ENCODE measurements at regions of chr10 and their contacts with region 1.

Region 1: DNA sequence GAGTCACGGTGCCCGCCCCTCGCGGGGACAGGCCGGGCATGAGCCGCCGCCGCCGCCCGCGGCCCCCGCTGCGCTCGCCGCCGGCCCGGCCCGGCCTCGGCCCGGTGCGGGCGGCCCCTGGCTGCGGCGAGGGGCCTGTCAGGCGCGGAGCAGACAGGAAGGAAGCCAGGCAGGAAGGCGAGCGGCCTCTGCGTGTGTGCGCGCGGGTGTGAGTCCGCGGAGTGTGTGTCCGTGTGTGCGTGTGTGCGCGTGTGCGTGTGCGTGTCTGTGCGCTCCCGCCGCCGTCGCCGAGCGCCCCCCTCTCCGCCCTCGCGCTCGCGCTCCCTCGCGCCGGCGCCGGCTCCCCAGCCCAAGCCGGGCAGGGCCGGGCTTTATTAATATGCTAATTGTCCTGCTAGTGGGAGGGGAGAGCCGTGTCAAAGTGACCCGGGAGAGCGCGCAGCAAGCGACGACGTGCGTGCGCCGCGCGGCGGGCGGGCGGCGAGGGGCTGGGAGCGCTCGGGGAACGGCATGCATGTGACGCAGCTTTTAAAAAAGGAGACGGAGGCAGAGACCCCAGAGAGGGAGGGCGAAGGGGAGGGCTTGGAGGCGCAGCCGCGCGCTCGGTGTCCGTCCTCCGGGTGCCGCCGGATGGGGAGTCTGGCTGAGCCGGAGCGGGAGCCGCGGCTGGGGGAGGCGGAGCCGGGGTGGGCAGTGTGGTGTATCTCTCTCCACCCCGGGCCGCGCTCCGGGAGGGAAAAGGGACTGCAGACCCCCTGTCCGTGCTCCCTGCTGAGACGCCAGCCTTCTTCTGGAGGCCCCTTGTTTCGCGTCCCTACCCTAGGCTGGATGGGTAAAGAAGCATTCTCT is at the start of gene LDB1:
- DNase-seq: peak; percentile 91
- H3K4me3 Mint-ChIP-seq: peak within 1 kb of the TSS; percentile 94
- H3K27ac Mint-ChIP-seq: peak within 1 kb of the TSS; percentile 98
- H3K4me1 Mint-ChIP-seq: peaks cover 49% of the 10 kb centered on the region
- H3K27me3 Mint-ChIP-seq: no peaks in the 10 kb centered on the region
- total RNA-seq, gene LDB1: 76.4 and 78.2 TPM in 2 replicates

Region 2: GRCh38 chr10:101901340-101901739 is 219.0 kb before region 1 on chr10:
- intact Hi-C with region 1: no loop called
- DNase-seq: no peak
- H3K4me3 Mint-ChIP-seq: no peak overlapping the region
- H3K27ac Mint-ChIP-seq: no peak overlapping the region
- H3K4me1 Mint-ChIP-seq: peaks cover 11% of the 10 kb centered on the region
- H3K27me3 Mint-ChIP-seq: no peaks in the 10 kb centered on the region

Region 3: GRCh38 chr10:102064868-102065560 is 55.4 kb before region 1 on chr10 and contains the start of gene HPS6:
- intact Hi-C with region 1: loop called (anchors 2 kb)
- DNase-seq: peak; percentile 97
- H3K4me3 Mint-ChIP-seq: peak within 1 kb of the TSS; percentile 87
- H3K27ac Mint-ChIP-seq: peak within 1 kb of the TSS; percentile 94
- H3K4me1 Mint-ChIP-seq: peaks cover 23% of the 10 kb centered on the region
- H3K27me3 Mint-ChIP-seq: no peaks in the 10 kb centered on the region
- total RNA-seq, gene HPS6: 22.7 and 25.8 TPM in 2 replicates

Region 4: GRCh38 chr10:102140184-102140583 is 19.8 kb after region 1 on chr10:
- intact Hi-C with region 1: no loop called
- DNase-seq: no peak
- H3K4me3 Mint-ChIP-seq: no peak overlapping the region
- H3K27ac Mint-ChIP-seq: no peak overlapping the region
- H3K4me1 Mint-ChIP-seq: peaks cover 21% of the 10 kb centered on the region
- H3K27me3 Mint-ChIP-seq: no peaks in the 10 kb centered on the region

Region 5: DNA sequence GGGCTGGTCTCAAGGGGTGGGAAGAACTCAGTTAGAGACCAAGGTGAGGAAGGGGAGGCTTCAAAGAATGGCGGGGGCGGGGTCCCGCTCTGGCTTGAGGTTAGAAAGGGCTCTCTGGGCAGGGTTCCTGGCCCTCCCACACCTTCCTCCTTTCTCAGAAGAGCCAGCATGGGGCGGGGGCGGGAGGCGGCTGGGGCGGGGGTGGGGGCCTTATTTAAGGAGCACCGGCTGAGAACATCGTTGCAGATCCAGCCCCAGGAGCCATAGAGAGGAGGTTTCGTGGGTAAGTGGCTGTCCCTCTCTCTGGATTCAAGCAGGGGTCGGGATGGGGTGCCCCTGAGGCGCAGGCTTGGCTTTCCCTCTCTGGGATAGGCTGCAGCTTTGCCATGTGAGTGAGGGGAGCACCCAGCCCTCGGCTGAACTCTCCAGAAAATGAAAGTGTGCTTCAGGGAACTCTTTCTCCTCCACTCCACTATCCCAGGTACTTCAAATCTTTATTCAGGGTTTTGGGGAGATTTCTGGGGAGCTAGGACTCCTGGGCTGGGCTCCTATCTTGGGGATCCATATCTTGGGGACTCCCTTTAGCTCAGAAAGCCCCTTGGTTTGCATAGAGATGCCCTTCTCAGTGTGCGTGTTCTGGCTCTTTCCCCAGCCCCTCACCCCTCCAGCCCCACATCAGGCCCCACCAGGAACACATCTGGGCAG is 315.3 kb after region 1 on chr10:
- intact Hi-C with region 1: no loop called
- DNase-seq: peak; percentile 89
- H3K4me3 Mint-ChIP-seq: peak overlapping the region; percentile 94
- H3K27ac Mint-ChIP-seq: peak overlapping the region; percentile 91
- H3K4me1 Mint-ChIP-seq: peaks cover 51% of the 10 kb centered on the region
- H3K27me3 Mint-ChIP-seq: no peaks in the 10 kb centered on the region